ENCODE measurements at regions of chr6 and their contacts with region 1.

Region 1: GRCh38 chr6:41182069-41183034 is 18.6 kb downstream of the TREML2 start:
- DNase-seq: peak; percentile 66
- ATAC-seq: peak; percentile 96
- H3K4me3 Mint-ChIP-seq: no peak overlapping the region
- H3K27ac Mint-ChIP-seq: no peak overlapping the region
- H3K4me1 Mint-ChIP-seq: peaks cover 11% of the 10 kb centered on the region
- H3K27me3 Mint-ChIP-seq: no peaks in the 10 kb centered on the region
- CTCF ChIP-seq: peak; percentile 64

Region 2: GRCh38 chr6:40832691-40833090 is 349.7 kb before region 1 on chr6:
- CTCF ChIA-PET with region 1: no interaction called
- POLR2A ChIA-PET with region 1: no interaction called
- intact Hi-C with region 1: no loop called
- DNase-seq: no peak
- ATAC-seq: no peak
- H3K4me3 Mint-ChIP-seq: no peak overlapping the region
- H3K27ac Mint-ChIP-seq: no peak overlapping the region
- H3K4me1 Mint-ChIP-seq: no peaks in the 10 kb centered on the region
- H3K27me3 Mint-ChIP-seq: peaks cover 14% of the 10 kb centered on the region
- CTCF ChIP-seq: no peak

Region 3: GRCh38 chr6:41072676-41073623 is 109.4 kb before region 1 on chr6 and contains the start of gene NFYA:
- CTCF ChIA-PET with region 1: interaction called, 6 read pairs
- POLR2A ChIA-PET with region 1: no interaction called
- intact Hi-C with region 1: loop called (anchors 10 kb)
- DNase-seq: peak; percentile 99
- ATAC-seq: peak; percentile 74
- H3K4me3 Mint-ChIP-seq: peak within 1 kb of the TSS; percentile 91
- H3K27ac Mint-ChIP-seq: peak within 1 kb of the TSS; percentile 98
- H3K4me1 Mint-ChIP-seq: peaks cover 52% of the 10 kb centered on the region
- H3K27me3 Mint-ChIP-seq: no peaks in the 10 kb centered on the region
- CTCF ChIP-seq: peak; percentile 65
- total RNA-seq, gene NFYA: 30.7 to 31.1 TPM

Region 4: DNA sequence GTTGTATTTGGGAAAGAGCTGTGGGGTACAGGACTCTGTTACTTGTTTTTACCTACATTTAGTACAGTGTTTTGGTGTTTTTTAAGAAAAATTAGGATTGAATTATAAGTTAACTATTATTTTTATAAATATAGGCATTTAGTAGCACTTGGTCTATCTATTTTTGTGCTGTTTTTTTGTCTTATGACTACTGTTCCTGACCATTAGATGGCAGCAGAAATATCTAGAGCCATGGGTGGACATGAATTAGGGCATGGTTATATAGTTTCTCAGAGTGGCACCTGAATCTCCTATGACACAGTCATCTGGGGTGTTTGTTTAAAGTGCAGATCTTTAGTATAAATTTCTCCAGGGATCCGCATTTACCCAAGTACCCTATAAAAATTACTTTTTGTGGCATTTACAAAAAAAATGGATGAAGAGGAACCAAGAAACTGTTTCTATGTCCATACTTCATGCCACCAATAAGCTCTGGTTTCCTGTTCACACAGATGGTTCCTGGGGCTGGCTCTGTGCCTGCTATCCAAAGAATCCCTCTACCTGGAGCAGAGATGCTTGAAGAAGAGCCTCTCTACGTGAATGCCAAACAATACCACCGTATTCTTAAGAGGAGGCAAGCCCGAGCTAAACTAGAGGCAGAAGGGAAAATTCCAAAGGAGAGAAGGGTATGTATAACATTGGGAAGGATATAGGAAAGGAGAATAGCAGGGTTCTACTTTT is 89.8 kb before region 1 on chr6:
- CTCF ChIA-PET with region 1: interaction called, 14 read pairs
- POLR2A ChIA-PET with region 1: no interaction called
- intact Hi-C with region 1: no loop called
- DNase-seq: no peak
- ATAC-seq: peak; percentile 47
- H3K4me3 Mint-ChIP-seq: no peak overlapping the region
- H3K27ac Mint-ChIP-seq: no peak overlapping the region
- H3K4me1 Mint-ChIP-seq: no peaks in the 10 kb centered on the region
- H3K27me3 Mint-ChIP-seq: no peaks in the 10 kb centered on the region
- CTCF ChIP-seq: peak; percentile 45

Region 5: DNA sequence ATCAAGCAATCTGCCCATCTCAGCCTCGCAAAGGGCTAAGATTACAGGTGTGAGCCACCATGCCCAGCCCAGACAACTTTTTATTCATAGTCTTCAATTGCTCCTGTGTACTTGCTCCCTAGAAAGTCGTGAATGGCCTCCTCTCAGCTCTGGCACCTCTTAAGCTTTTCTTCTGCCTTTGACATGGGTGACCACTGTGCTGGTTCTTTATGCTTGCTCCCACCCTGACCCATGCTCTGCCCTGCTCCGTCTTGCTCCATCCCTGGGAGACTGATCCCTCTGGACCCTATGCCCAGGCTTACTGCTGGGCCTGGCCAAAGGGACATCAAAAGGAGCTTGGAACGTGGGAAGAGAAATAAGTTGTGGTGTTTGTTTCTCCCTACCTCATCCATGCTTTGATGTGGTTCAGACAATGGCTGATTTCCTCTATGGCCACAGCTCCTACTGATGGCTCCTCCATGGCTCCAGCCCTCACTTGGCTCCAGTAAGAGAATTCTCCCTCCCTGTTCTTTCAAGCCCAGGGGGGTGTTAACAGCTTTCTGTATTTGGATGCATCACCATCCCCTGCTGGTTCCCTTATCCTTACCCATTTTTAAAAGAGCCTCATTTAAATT is 11.7 kb before region 1 on chr6:
- CTCF ChIA-PET with region 1: interaction called, 21 read pairs
- POLR2A ChIA-PET with region 1: interaction called, 3 read pairs
- intact Hi-C with region 1: no loop called
- DNase-seq: no peak
- ATAC-seq: no peak
- H3K4me3 Mint-ChIP-seq: no peak overlapping the region
- H3K27ac Mint-ChIP-seq: no peak overlapping the region
- H3K4me1 Mint-ChIP-seq: no peaks in the 10 kb centered on the region
- H3K27me3 Mint-ChIP-seq: no peaks in the 10 kb centered on the region
- CTCF ChIP-seq: no peak

Region 6: DNA sequence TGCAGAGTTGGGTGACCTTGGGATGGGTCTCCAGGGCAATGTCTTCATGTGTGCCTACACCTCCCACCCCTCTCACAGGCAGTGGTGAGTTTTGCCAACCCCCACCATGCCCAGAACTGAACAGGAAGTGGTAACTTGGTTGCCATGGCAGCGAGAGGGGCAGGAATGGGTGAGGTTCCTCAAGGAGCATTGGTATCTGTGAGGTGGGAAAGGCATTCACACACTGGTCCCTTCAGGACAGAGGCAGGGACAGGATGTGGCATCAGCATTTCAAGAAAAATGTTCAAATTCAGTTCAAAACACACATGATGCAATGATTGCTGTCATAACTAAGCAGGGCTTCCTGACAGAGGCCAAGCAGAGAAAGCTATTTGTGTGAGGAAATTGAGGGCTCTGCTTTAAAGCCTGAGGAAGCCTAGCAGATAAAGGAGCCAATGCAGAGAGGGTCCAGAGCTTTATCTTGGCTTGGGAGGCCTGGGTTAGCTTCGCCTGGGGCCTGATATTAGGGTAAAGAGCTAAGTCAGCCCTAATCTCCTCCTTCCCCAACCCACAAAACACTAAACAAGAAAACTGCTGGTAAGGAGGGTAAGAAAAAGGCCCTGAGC is 18.0 kb after region 1 on chr6:
- CTCF ChIA-PET with region 1: interaction called, 13 read pairs
- POLR2A ChIA-PET with region 1: interaction called, 3 read pairs
- intact Hi-C with region 1: no loop called
- DNase-seq: peak; percentile 73
- ATAC-seq: peak; percentile 52
- H3K4me3 Mint-ChIP-seq: peak overlapping the region; percentile 74
- H3K27ac Mint-ChIP-seq: peak overlapping the region; percentile 95
- H3K4me1 Mint-ChIP-seq: peaks cover 49% of the 10 kb centered on the region
- H3K27me3 Mint-ChIP-seq: no peaks in the 10 kb centered on the region
- CTCF ChIP-seq: no peak

Region 7: GRCh38 chr6:41278699-41279405 is 96.5 kb after region 1 on chr6:
- CTCF ChIA-PET with region 1: interaction called, 13 read pairs
- POLR2A ChIA-PET with region 1: no interaction called
- intact Hi-C with region 1: no loop called
- DNase-seq: peak; percentile 85
- ATAC-seq: peak; percentile 92
- H3K4me3 Mint-ChIP-seq: no peak overlapping the region
- H3K27ac Mint-ChIP-seq: peak overlapping the region; percentile 55
- H3K4me1 Mint-ChIP-seq: peaks cover 12% of the 10 kb centered on the region
- H3K27me3 Mint-ChIP-seq: no peaks in the 10 kb centered on the region
- CTCF ChIP-seq: peak; percentile 72